ENCODE measurements at regions of chr1 and their contacts with region 1.

Region 1: DNA sequence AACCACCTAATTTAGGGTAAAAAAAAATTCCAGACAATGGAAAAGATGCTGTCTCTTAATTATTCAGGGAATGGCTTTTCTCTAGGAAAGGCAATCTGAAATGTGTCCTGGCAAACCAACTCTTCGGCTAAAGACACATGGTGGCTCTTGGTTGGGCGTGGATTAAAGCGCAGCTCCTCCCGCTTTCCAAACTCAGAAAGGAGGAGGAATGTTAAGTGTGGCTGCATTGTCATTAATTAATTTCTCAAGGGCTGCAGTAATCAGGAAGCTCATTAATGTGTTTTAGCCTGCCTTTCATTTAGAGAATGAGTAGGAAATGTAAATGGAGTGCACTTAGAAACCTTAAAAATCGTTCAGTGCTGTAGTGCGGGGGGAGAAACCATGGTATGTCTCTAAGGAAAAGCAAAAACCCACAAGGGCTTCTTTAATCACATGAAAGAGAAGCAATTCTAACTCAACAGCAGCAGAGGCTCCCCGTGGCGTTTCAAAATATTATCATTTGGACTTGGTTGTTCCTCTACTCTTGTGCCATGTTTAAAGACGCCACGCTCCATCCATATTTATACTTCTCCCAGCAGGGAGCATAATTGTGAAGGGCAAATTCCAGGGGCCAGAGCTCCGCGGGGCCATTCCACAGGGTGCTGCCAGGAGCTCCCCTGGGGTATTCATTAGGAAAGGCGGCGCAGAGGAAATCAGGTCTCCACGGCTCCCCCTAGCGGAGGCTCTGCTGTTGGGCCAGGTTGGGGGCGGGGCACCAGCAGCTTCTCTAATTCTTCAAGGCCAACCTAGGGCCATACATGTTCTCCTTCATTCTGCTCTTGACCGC is 91.9 kb upstream of the SSX2IP start:
- DNase-seq: peak; percentile 64 to 98
- H3K4me3 ChIP-seq: peak overlapping the region in 3 of 4 experiments; percentile 19 to 44 (median 35); a peak in 5 of 8 replicates
- H3K27ac ChIP-seq: no peak overlapping the region
- H3K4me1 ChIP-seq: peaks cover 0 to 4% (median 0%) of the 10 kb centered on the region in 4 experiments; a peak in 2 of 7 replicates
- H3K27me3 ChIP-seq: no peaks in the 10 kb centered on the region
- CTCF ChIP-seq: peak; percentile 82 to 84 (median 84)
- EP300 ChIP-seq: no peak
- POLR2A ChIP-seq: no peak
- RAD21 ChIP-seq: peak; percentile 51 to 64

Region 2: DNA sequence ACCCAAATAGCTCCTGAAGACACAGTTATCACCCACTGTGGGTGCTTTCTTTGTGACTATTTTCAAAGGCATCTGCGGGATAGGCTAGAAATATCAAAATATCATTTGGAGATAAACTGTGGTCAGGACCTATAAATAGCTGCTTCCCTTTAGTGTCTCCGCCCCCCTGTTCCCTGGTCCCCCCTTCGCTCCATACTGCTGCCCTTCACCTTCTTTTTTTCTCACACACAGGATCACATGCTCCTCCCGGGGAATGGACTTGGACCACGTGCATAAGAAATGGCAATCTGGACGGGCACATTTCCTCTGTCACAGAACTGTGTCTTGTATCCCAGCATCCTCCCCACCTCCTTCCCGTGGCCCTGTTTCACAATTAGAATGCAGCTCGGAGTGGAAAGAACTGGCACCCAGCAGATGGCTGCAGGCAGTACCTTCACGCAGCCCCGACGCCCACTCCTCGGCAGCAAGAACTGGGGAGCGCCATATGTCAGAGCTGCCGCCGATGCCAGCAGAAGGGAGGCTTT is 23.1 kb before region 1 on chr1:
- CTCF ChIA-PET with region 1: interaction called, 164 read pairs
- POLR2A ChIA-PET with region 1: no interaction called
- DNase-seq: no peak
- H3K4me3 ChIP-seq: no peak overlapping the region
- H3K27ac ChIP-seq: no peak overlapping the region
- H3K4me1 ChIP-seq: peaks cover 0 to 11% (median 5%) of the 10 kb centered on the region in 4 experiments; a peak in 5 of 7 replicates
- H3K27me3 ChIP-seq: no peaks in the 10 kb centered on the region
- CTCF ChIP-seq: no peak
- EP300 ChIP-seq: no peak
- POLR2A ChIP-seq: no peak
- RAD21 ChIP-seq: no peak

Region 3: DNA sequence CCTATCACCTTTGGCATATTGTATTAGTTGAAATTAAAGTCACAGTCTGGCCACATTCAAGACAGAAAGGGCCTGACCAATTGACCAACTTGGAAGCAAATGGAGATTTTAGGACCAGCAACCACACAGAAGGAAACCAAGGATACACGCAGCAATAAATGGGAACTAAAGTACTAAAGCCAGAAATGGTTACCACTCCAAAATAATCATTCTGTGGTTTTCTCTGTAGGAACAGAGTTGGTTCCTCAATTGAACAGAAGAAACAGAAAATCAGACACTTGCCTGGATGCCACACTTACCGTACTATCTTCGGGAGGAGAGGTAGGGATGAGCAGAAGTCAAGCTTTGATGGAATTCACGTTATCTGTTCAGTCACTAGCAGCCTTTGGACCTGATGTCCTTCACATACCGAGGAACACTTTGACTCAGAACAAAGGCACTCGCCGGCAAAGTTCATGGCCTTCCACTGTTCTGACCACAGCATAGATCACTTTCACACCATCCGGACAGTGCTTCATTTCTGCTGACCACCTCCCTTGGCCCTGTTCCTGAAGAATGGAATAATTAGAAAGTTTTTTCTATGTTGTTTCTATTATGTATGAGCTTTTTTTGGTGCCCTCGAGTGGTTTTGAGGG is 13.9 kb after region 1 on chr1:
- CTCF ChIA-PET with region 1: interaction called, 48 read pairs
- POLR2A ChIA-PET with region 1: no interaction called
- DNase-seq: no peak
- H3K4me3 ChIP-seq: no peak overlapping the region
- H3K27ac ChIP-seq: no peak overlapping the region
- H3K4me1 ChIP-seq: no peaks in the 10 kb centered on the region
- H3K27me3 ChIP-seq: no peaks in the 10 kb centered on the region
- CTCF ChIP-seq: no peak
- EP300 ChIP-seq: no peak
- POLR2A ChIP-seq: no peak
- RAD21 ChIP-seq: no peak

Region 4: DNA sequence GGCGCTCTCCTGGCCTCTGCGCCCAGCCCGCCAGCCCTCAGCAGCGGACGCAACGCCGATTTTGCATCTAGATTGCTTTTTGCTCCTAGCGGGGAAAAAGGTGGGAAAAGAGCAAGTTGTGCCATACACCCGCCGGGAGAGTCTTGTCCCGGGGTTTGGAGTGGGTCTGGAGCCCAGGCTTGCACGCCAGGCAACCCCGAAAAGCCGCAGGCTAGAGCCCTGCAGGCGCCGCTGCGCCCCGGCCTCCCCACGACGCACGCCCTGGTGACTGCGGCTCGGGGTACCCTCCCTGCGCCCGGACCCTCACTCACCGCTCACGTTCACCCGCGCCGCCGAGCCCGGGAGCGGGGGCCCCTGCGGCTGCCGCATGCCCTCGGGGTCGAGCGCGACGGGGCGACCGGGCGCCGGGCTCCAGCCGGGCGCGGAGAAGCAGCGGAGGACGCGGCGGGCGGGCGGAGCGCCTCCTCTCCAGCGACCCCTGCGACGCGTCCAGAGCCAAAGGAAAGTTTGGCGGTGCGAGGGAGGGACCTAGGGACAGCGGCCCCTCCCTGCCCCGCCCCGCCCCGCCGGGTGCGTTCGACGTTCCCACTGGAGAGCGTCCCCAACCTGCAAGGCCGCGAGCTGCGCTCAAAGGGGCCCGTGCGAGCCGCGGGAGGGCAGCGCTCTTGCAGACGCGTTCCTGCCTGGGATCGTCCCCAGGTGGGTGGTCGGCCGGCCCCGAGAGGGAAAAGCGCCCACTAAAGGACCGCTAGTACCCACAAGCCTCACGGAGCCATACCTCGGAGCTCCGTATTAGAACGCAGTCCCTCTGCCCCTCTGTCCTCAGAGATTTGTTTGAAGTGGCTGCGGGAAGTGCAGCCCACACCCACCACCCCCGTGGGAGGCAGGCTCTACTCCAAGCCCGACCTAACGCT is 110.8 kb after region 1 on chr1 and contains the start of gene LPAR3:
- CTCF ChIA-PET with region 1: interaction called, 10 read pairs
- POLR2A ChIA-PET with region 1: no interaction called
- DNase-seq: peak in 1 of 2 experiments; percentile 85
- H3K4me3 ChIP-seq: peak within 1 kb of the TSS; percentile 58 to 78 (median 69)
- H3K27ac ChIP-seq: no peak within 1 kb of the TSS
- H3K4me1 ChIP-seq: peaks cover 0 to 23% (median 5%) of the 10 kb centered on the region in 4 experiments; a peak in 3 of 7 replicates
- H3K27me3 ChIP-seq: peaks cover 0 to 13% (median 7%) of the 10 kb centered on the region in 4 experiments; a peak in 5 of 7 replicates
- CTCF ChIP-seq: no peak
- EP300 ChIP-seq: no peak
- POLR2A ChIP-seq: peak in 1 of 2 experiments; percentile 57; a peak in 1 of 3 replicates
- RAD21 ChIP-seq: no peak; a peak in 1 of 4 replicates
- total RNA-seq, gene LPAR3: 25.4 and 26.8 TPM in 2 replicates

Region 5: GRCh38 chr1:84936116-84936810 is 154.1 kb after region 1 on chr1:
- CTCF ChIA-PET with region 1: interaction called, 59 read pairs
- POLR2A ChIA-PET with region 1: no interaction called
- DNase-seq: peak in 1 of 2 experiments; percentile 53
- H3K4me3 ChIP-seq: no peak overlapping the region
- H3K27ac ChIP-seq: no peak overlapping the region
- H3K4me1 ChIP-seq: no peaks in the 10 kb centered on the region
- H3K27me3 ChIP-seq: no peaks in the 10 kb centered on the region
- CTCF ChIP-seq: peak in 2 of 3 experiments; percentile 79 to 83; a peak in 3 of 4 replicates
- EP300 ChIP-seq: no peak
- POLR2A ChIP-seq: no peak
- RAD21 ChIP-seq: peak; percentile 95 to 97

Measured in H1 (cell line).